Gastrocnemius medialis (tissue), 4 donors: ENCODE measurements at regions of chr4 and their contacts with region 1.

Region 1: GRCh38 chr4:24768604-24769003 is 26.8 kb upstream of the SOD3 start:
- DNase-seq: no peak
- ATAC-seq: no peak
- H3K4me3 ChIP-seq: no peak overlapping the region
- H3K27ac ChIP-seq: no peak overlapping the region
- H3K4me1 ChIP-seq: peaks cover 0 to 4% of the 10 kb centered on the region in 2 donors
- H3K27me3 ChIP-seq: no peaks in the 10 kb centered on the region
- CTCF ChIP-seq: no peak
- POLR2A ChIP-seq: no peak

Region 2: GRCh38 chr4:24274381-24274941 is 494.1 kb before region 1 on chr4:
- in situ Hi-C with region 1: no loop called
- intact Hi-C with region 1: no loop called
- DNase-seq: no peak
- ATAC-seq: no peak
- H3K4me3 ChIP-seq: no peak overlapping the region
- H3K27ac ChIP-seq: no peak overlapping the region
- H3K4me1 ChIP-seq: peaks cover 0 to 1% of the 10 kb centered on the region in 2 donors
- H3K27me3 ChIP-seq: no peaks in the 10 kb centered on the region
- CTCF ChIP-seq: no peak
- POLR2A ChIP-seq: no peak

Region 3: GRCh38 chr4:24743931-24744330 is 24.7 kb before region 1 on chr4:
- in situ Hi-C with region 1: no loop called
- intact Hi-C with region 1: loop called (anchors 2 kb)
- DNase-seq: no peak
- ATAC-seq: no peak
- H3K4me3 ChIP-seq: no peak overlapping the region
- H3K27ac ChIP-seq: no peak overlapping the region
- H3K4me1 ChIP-seq: peaks cover 29 to 46% of the 10 kb centered on the region in 2 donors
- H3K27me3 ChIP-seq: no peaks in the 10 kb centered on the region
- CTCF ChIP-seq: no peak
- POLR2A ChIP-seq: no peak

Region 4: DNA sequence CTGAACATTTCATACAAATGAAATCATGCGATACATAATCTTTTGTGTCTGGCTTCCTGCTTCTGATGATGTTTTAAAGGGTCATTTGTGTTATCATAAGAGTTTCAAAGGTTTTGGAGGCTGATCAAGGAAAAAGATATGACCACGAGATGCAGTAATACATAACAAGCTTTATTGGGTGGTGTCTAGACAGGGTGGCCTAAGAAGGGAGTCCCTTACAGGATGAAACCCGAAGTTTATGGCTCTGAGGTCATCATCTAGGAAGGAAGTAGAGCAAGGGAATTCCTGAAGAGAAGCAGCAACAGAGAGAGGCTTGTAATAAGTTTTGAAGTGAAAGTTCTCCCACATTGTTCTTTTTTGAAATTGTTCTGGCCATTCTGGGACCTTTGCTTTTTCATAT is 14.0 kb before region 1 on chr4:
- in situ Hi-C with region 1: no loop called
- intact Hi-C with region 1: no loop called
- DNase-seq: no peak
- ATAC-seq: no peak
- H3K4me3 ChIP-seq: no peak overlapping the region
- H3K27ac ChIP-seq: no peak overlapping the region
- H3K4me1 ChIP-seq: no peaks in the 10 kb centered on the region
- H3K27me3 ChIP-seq: no peaks in the 10 kb centered on the region
- CTCF ChIP-seq: no peak
- POLR2A ChIP-seq: no peak